ENCODE measurements at regions of chr15 and their contacts with region 1.

Region 1: DNA sequence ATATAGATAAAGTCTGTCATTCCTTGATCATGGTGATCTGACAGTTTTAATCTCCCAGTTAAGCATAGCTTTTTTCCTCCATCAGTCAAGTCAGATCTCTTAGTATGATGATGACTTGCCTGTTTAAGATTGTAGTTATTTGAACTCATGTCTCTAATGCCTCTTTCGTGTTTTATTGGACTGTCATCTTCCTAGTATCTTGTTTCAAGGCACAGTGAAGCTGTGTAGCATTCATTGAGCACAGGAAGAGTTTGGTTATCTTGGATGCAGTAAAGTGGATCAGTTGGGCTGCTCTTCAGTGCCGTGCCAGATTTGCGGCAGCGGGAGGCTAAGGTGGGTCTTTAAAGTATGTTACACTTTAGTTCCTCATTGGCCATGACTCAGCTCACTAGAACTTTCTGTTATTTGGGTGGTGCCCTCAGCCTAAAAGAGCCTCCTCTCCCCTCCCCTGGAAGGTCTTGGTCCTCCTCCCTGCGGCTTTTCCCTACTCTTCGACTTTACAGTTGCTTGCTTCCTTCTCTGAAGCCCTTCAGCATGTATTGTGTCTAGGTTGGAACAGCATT is 45.7 kb upstream of the SKOR1 start:
- DNase-seq: no peak

Region 2: DNA sequence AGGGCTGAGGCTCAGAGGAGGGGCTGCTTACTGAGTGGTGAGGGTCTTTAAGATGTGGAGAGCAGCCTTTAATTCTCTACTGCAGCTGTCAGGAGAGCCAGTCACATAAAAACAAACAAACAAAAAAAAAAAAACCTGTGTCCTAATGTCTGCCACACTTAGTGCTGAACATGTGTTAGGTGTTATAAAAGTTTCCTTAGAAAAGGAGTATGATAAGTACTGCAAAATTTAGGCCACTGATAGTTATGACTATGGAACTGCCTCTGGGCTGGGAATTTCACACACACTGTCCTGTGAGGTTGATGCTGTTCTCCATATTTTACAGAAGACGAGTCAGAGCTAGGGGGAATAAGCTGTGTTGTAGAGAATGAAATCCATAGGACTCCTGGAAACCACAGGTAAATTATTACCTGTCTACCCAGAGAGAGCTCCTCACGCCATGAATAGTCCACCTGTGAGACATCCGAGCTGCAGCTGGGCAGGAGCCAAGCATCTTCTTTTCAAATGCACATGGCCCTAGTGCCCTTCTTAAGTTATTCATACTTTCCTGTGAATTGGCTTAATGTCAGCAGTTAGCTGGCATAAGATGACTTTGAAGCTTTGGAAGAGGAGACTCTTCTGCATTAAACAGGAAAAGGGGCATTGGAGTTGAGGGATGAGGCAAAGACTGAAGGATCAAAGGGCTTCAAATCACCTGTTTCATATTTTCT is 11.1 kb after region 1 on chr15:
- CTCF ChIA-PET with region 1: interaction called, 3 read pairs
- POLR2A ChIA-PET with region 1: interaction called, 11 read pairs
- DNase-seq: no peak

Region 3: GRCh38 chr15:67832031-67832551 is 52.5 kb after region 1 on chr15:
- CTCF ChIA-PET with region 1: no interaction called
- POLR2A ChIA-PET with region 1: no interaction called
- DNase-seq: no peak

Measured in HEK293T (cell line).